Heart right ventricle (tissue), 16 donors: ENCODE measurements at regions of chr10 and their contacts with region 1.

Region 1: DNA sequence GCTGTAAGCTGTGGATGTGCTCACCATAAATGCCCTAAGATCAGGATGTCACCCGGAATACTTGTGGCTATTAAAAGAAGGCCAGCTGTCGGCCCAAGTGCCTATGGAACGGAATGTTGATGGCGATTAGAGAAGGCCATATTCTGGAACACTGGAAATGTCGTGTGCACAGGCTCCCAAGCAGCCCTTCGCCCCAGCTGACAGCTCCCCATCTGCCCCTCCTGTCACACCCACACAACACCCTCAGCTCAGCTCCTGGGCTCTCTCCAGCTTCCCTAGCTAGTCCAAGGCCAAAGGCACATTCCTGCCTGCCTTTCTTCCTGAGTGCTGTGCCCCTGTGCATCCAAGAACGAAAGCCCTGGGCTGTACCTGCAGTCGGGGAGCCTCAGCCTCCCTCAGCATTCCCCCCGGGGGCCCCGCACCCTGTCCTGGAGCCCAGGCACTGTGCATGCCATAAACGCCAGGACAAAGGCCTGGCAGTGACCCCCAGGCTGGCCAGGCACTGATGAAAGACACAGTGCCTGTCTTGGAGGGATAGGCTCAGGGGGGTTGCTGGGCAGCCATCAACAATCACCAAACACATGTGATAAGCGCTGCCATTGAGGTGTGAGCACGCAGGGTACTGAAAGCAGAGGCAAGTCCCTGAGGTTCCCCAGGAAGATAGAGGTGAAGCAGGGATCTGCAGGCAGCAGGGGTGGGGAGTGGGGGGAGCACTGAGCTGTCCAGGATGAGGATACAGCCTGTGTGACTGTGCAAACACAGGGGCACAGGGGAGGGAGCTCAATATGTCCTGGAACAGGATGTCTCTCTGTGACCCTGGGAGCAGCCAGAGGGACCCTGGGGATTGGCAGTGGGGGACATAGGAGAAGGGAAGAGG is 3.7 kb upstream of the LDB3 start:
- DNase-seq: peak; percentile 77 to 79
- ATAC-seq: peak; percentile 11 to 56 (median 35)
- H3K4me3 ChIP-seq: peak overlapping the region in 1 of 10 donors; percentile 61
- H3K27ac ChIP-seq: peak overlapping the region; percentile 83 to 100 (median 96)
- H3K4me1 ChIP-seq: peaks cover 3 to 84% (median 46%) of the 10 kb centered on the region in 9 donors
- H3K27me3 ChIP-seq: no peaks in the 10 kb centered on the region
- CTCF ChIP-seq: no peak

Region 2: GRCh38 chr10:86363184-86363832 is 301.3 kb before region 1 on chr10:
- intact Hi-C with region 1: no loop called
- DNase-seq: peak in 1 of 2 donors; percentile 54
- ATAC-seq: peak; percentile 50 to 81 (median 68)
- H3K4me3 ChIP-seq: peak overlapping the region in 2 of 10 donors; percentile 1 to 14
- H3K27ac ChIP-seq: no peak overlapping the region
- H3K4me1 ChIP-seq: peaks cover 0 to 58% (median 32%) of the 10 kb centered on the region in 9 donors
- H3K27me3 ChIP-seq: peaks cover 7 to 65% (median 52%) of the 10 kb centered on the region in 7 donors
- CTCF ChIP-seq: peak in 8 of 9 donors; percentile 17 to 69 (median 62)

Region 3: DNA sequence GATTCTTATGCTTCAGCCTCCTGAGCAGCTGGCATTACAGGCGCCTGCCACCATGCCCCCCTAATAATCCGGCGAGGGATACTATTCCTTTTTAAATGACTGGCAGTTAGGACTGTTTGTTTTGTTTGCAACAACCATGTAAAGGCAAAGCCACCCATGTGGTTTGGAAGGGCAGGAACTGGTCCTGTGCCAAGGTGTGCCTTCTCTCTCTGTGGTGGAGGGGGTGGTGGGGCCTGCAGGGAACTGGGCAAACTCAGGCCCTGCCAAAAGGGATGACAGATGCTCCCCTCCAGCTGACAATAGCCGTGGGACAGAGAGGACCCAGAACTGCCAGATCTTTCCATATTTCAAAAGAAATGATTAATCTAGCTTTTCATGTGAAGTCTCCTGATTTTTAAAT is 119.5 kb before region 1 on chr10:
- intact Hi-C with region 1: no loop called
- DNase-seq: no peak
- ATAC-seq: no peak
- H3K4me3 ChIP-seq: no peak overlapping the region
- H3K27ac ChIP-seq: no peak overlapping the region
- H3K4me1 ChIP-seq: no peaks in the 10 kb centered on the region
- H3K27me3 ChIP-seq: no peaks in the 10 kb centered on the region
- CTCF ChIP-seq: no peak

Region 4: DNA sequence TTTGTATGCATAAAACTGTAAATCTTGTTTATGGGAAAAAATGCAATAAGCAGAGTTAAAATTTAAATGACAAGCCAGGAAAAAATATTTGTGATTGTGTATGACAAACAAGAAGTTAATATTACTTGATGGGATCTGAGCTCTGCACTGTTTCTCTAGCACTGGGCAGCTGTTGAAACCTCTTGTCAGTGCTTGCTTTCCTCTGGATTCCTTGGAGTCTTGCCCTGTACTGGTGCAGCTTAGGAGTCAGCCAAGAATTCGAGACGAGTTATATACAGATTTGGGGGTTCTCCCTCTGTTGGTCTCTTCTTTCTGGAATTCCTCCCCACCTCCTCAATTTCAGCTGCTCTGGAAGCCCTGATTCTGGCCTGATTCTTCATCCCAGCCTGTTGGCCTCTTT is 34.5 kb before region 1 on chr10:
- intact Hi-C with region 1: loop called in 1 of 10 experiments (anchors 2 kb)
- DNase-seq: peak in 1 of 2 donors; percentile 75
- ATAC-seq: peak; percentile 70 to 91 (median 88)
- H3K4me3 ChIP-seq: no peak overlapping the region
- H3K27ac ChIP-seq: peak overlapping the region in 5 of 10 donors; percentile 33 to 54 (median 49)
- H3K4me1 ChIP-seq: peaks cover 0 to 31% (median 6%) of the 10 kb centered on the region in 9 donors
- H3K27me3 ChIP-seq: peaks cover 0 to 57% (median 22%) of the 10 kb centered on the region in 7 donors
- CTCF ChIP-seq: no peak

Region 5: DNA sequence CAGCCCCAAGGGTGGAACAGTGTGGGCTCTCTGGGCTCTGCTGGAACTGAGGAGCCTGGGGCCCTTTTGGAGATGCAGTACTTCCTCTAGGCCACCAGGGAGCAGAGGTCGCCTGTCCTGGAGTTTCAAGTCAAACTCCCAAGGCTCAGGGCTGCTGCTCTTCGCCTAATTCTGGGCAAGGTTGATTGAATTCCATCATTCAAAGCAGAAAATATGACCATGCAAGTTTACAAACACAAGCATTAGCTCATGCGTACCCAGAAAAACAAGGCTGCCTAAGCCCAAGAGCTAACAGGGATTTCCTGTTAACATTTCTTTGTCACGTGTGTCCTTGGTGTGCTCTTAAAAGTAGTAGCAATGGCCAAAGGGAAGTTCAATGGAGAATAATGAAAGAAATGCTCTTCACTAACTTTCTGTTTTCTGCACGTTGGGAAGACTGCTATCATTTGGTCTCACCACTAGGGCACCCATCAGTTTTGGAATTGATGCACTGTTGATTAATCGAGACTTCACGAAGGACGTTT is 23.9 kb after region 1 on chr10:
- intact Hi-C with region 1: loop called in 2 of 10 experiments (anchors 2 kb)
- DNase-seq: peak in 1 of 2 donors; percentile 62
- ATAC-seq: peak in 2 of 8 donors; percentile 11 to 14
- H3K4me3 ChIP-seq: no peak overlapping the region
- H3K27ac ChIP-seq: peak overlapping the region in 7 of 10 donors; percentile 28 to 100 (median 49)
- H3K4me1 ChIP-seq: peaks cover 13 to 100% (median 40%) of the 10 kb centered on the region in 9 donors
- H3K27me3 ChIP-seq: peaks cover 0 to 17% (median 6%) of the 10 kb centered on the region in 7 donors
- CTCF ChIP-seq: peak; percentile 54 to 87 (median 82)